Activated CD4-positive, alpha-beta memory T cell treated with anti-CD3 and anti-CD28 coated beads for 36 hours (primary cell): ENCODE measurements at regions of chr6 and their contacts with region 1.

Region 1: DNA sequence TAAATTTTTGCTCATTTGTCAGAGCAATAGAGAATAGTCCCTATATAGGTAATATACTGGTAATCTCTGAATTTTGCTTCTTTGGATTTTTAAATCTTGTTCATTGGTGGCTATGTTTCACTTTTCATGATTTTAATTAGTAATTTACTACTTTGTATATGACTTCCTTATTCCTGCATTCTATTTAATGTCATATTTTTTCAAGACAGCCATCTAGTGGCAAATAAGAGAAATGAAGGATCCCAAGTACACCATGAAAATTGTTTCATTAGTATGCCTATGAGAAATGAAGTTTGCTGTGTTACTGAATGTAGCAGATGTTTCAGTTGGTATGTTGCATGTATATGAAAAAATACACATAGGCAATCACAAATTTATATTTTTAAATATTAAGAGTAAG is 82.4 kb downstream of the ZNF292 start:
- DNase-seq: no peak
- H3K4me3 Mint-ChIP-seq: no peak overlapping the region
- H3K27ac Mint-ChIP-seq: no peak overlapping the region
- H3K4me1 Mint-ChIP-seq: peaks cover 8% of the 10 kb centered on the region
- H3K27me3 Mint-ChIP-seq: no peaks in the 10 kb centered on the region

Region 2: DNA sequence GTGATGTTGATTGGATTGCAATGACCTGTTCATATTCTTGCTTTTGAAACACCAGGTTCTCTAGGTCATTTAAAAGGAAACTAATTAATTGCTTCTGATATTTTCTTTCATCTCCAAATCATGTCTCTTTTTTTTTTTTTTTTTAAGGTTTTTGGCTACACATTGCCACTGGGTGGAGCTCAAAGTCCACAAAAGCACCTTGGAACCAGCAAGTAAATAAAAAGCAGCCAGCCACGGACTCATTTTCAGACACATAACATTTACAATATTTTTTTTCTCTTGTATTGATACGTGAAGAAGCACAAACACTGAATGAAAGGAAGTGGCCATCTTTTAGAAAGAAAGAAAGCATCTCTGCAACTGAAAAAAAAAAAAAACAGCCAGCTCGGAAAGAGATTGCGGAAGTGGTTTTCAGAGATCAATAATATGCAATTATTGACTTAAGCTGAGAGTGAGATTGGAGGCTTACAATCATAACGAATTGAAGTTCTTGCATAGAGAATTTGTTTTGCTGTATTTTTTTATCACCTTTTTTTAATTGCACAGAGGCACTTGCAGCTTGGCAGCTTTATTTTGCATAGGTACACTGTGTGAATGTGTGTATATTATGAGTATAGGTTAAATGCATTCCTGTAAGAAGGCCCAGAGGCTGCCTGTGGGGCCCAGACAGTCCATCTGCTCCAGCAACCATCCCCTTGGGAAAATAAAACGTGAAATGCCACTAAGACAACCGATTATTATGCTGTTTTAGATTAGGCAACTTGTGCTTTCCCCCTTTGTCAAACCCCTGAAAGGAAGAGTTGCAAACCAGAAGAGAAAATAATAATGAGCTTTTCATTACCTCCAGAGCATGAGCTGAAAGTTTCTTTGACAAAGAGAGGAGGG is 171.1 kb before region 1 on chr6:
- CTCF ChIA-PET with region 1: interaction called, 3 read pairs
- POLR2A ChIA-PET with region 1: no interaction called
- intact Hi-C with region 1: loop called (anchors 5 kb)
- DNase-seq: peak; percentile 51
- H3K4me3 Mint-ChIP-seq: no peak overlapping the region
- H3K27ac Mint-ChIP-seq: no peak overlapping the region
- H3K4me1 Mint-ChIP-seq: peaks cover 2% of the 10 kb centered on the region
- H3K27me3 Mint-ChIP-seq: peaks cover 2% of the 10 kb centered on the region

Region 3: DNA sequence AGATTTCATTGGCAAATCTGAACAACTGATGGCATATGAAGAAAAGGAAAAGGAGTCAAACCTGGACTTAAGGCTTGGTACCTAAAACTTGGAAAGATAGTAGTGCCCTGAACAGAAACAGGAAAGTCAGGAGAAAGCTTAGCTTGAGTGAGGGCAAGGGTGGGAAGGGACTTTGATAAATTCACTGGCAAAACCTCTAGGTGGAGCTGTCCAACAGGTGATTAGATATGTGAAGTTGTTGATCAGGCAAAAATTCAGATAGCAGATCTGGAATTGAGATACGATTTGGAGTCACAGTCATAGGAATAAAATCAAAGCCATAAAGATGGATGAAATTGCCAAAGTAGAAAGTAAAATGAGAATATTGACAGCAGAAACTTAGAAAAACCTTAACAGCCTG is 98.6 kb before region 1 on chr6:
- CTCF ChIA-PET with region 1: interaction called, 29 read pairs
- POLR2A ChIA-PET with region 1: no interaction called
- intact Hi-C with region 1: loop called (anchors 1 kb)
- DNase-seq: no peak
- H3K4me3 Mint-ChIP-seq: no peak overlapping the region
- H3K27ac Mint-ChIP-seq: no peak overlapping the region
- H3K4me1 Mint-ChIP-seq: peaks cover 2% of the 10 kb centered on the region
- H3K27me3 Mint-ChIP-seq: peaks cover 4% of the 10 kb centered on the region